CD4-positive, alpha-beta memory T cell (primary cell): ENCODE measurements at regions of chr11 and their contacts with region 1.

Region 1: DNA sequence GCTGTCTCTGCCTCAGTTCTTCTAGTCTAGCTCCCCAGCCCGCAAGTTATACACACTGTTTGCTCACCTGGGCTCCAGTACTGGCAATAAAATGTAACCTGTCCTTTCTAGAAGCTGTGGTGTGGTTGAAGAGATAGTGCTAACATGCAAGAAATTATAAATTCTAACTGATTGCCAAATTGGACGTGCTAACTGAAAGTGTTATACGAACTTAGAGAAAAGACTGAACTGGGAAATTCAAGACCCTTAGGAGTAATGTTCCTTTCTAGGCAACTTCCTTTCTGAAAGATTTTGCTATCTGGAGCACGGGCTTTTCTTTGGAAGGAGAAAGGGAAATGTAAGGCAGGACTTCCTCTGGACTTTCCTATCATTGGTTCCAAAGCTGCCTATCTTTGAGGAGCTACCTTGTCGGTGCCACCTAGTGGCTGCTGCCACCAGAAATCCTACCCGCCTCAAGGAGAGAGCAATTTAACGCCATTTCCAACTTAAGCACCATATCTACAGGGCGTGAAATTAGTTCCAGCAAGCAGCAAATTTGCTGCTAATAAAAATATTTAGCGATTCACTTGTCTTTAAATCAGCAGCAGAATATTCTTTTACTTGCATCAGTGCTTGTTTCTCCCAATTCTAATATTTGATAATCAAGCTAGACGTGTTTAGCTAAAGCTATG is 12.7 kb upstream of the TMEM218 start:
- DNase-seq: peak; percentile 13 to 41 (median 24)
- H3K4me3 ChIP-seq: no peak overlapping the region
- H3K4me3 Mint-ChIP-seq: no peak overlapping the region
- H3K27ac ChIP-seq: no peak overlapping the region
- H3K27ac Mint-ChIP-seq: no peak overlapping the region
- H3K4me1 ChIP-seq: no peaks in the 10 kb centered on the region
- H3K4me1 Mint-ChIP-seq: peaks cover 0 to 7% (median 0%) of the 10 kb centered on the region in 4 donors
- H3K27me3 ChIP-seq: peaks cover 6% of the 10 kb centered on the region
- H3K27me3 Mint-ChIP-seq: peaks cover 17 to 20% of the 10 kb centered on the region in 2 donors

Region 2: DNA sequence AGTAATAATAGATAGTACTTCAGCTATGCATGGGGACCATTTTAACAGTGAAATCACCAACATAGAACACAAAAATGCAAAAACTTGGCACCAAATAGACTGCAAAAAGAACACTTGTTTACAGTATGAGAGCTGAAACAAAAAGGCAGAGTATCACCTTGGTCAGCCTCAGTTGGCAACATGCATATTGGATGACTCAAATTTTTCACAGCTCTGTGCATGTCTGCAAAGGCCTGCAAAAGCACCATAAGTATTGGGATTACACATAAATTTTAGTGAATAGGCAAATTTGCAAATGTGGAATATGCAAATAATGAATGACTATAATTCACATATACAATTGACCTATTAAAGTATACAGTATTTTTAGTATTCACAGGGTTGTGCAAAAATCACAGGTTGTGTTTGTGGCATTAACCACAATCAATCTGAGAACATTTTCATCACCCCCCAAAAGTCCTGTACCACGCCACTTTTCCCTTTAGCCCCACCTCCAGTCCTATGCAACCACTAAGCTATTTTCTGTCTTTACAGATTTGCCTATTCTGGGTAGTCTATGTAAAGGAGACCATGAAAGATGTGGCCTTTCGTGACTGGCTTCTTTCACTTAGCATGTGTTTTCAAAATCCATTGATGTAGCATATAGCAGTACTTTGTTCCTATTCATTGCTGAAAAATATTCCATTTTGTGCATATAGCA is 122.9 kb before region 1 on chr11:
- CTCF ChIA-PET with region 1: no interaction called
- POLR2A ChIA-PET with region 1: no interaction called
- intact Hi-C with region 1: no loop called
- DNase-seq: no peak
- H3K4me3 ChIP-seq: no peak overlapping the region
- H3K4me3 Mint-ChIP-seq: no peak overlapping the region
- H3K27ac ChIP-seq: no peak overlapping the region
- H3K27ac Mint-ChIP-seq: no peak overlapping the region
- H3K4me1 ChIP-seq: no peaks in the 10 kb centered on the region
- H3K4me1 Mint-ChIP-seq: no peaks in the 10 kb centered on the region
- H3K27me3 ChIP-seq: no peaks in the 10 kb centered on the region
- H3K27me3 Mint-ChIP-seq: no peaks in the 10 kb centered on the region

Region 3: DNA sequence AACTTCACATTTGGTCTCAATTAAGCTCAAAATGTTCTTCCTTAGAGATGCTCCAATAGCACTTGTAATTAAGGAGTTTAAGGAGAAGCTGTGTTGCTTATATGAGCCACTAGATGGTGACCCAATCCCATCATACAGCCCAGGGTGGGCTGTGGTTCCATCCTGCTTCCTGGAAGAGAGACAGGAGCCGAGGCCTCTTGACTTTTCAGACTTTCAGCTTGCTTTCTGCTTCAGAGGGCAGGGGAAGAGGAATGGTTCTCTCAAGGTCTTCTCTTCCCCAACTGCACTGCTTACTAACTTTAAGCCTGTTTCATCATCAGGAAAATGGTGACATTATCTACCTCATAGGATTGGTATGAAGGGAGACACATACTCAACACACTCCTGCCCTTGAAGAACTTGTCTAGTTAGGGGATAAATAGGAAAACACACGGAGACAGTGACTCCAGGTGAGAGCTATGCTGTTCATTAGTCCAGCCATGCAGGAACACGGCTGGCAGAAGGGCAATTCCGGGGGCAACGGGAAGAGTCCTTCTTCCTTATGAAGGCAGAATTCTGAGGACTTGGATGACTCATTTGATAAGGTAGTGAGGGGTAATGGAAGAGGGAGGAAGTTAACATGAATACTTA is 32.7 kb before region 1 on chr11:
- CTCF ChIA-PET with region 1: interaction called, 23 read pairs
- POLR2A ChIA-PET with region 1: no interaction called
- intact Hi-C with region 1: no loop called
- DNase-seq: no peak
- H3K4me3 ChIP-seq: no peak overlapping the region
- H3K4me3 Mint-ChIP-seq: no peak overlapping the region
- H3K27ac ChIP-seq: no peak overlapping the region
- H3K27ac Mint-ChIP-seq: no peak overlapping the region
- H3K4me1 ChIP-seq: no peaks in the 10 kb centered on the region
- H3K4me1 Mint-ChIP-seq: no peaks in the 10 kb centered on the region
- H3K27me3 ChIP-seq: no peaks in the 10 kb centered on the region
- H3K27me3 Mint-ChIP-seq: no peaks in the 10 kb centered on the region

Region 4: GRCh38 chr11:125105926-125106325 is 18.2 kb before region 1 on chr11:
- CTCF ChIA-PET with region 1: interaction called, 28 read pairs
- POLR2A ChIA-PET with region 1: interaction called, 11 read pairs
- intact Hi-C with region 1: loop called (anchors 2 kb)
- DNase-seq: no peak
- H3K4me3 ChIP-seq: no peak overlapping the region
- H3K4me3 Mint-ChIP-seq: no peak overlapping the region
- H3K27ac ChIP-seq: no peak overlapping the region
- H3K27ac Mint-ChIP-seq: peak overlapping the region in 1 of 7 donors; percentile 67
- H3K4me1 ChIP-seq: peaks cover 9% of the 10 kb centered on the region
- H3K4me1 Mint-ChIP-seq: peaks cover 4 to 17% (median 8%) of the 10 kb centered on the region in 4 donors
- H3K27me3 ChIP-seq: no peaks in the 10 kb centered on the region
- H3K27me3 Mint-ChIP-seq: no peaks in the 10 kb centered on the region

Region 5: DNA sequence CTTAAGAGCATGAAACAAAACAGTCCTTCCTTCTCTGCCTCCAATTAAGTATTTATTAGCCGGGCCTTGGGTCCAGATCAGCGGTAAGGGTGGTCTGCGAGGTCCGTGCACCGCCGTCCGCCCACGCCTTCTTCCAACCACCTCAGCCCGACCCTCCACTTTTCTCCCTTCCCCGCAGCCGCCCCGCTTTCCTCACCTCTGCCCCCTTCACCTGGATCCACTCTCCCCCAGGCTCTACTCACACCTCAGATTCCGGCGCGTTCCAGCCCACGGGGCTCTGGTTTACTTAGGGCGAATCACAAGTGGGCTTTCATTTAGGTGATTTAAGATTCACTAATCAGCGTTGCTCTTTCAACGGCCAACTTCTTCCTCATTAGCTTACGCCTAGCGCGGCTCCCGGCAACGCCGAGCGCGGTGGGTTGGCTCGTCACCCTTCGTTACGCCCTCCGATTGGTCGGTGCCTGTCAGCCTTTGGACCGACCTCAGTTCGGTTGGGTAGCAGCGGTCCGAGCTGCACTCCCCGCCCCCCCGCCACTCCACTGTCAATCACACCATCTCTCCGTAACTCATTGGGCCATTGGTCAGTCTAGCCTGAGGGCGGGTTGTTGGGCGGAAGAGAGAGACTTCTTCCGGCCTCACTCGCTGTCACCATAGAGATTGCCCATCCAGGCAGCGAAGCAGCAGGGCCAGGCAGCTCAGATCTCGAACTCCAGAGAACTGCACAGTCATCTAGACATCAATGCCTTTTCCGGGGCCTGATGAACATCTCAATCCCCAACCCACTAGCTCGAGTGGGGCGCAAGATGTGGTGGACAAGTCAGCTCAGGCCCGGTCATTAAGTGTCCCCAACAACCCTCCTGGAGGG is 12.5 kb before region 1 on chr11 and contains the start of gene TMEM218:
- CTCF ChIA-PET with region 1: interaction called, 28 read pairs
- POLR2A ChIA-PET with region 1: interaction called, 11 read pairs
- intact Hi-C with region 1: loop called (anchors 2 kb)
- DNase-seq: peak; percentile 94 to 97 (median 96)
- H3K4me3 ChIP-seq: peak within 1 kb of the TSS; percentile 72 to 89
- H3K4me3 Mint-ChIP-seq: peak within 1 kb of the TSS; percentile 92 to 100 (median 98)
- H3K27ac ChIP-seq: peak within 1 kb of the TSS; percentile 68
- H3K27ac Mint-ChIP-seq: peak within 1 kb of the TSS; percentile 74 to 99 (median 97)
- H3K4me1 ChIP-seq: peaks cover 18% of the 10 kb centered on the region
- H3K4me1 Mint-ChIP-seq: peaks cover 4 to 25% (median 18%) of the 10 kb centered on the region in 4 donors
- H3K27me3 ChIP-seq: no peaks in the 10 kb centered on the region
- H3K27me3 Mint-ChIP-seq: no peaks in the 10 kb centered on the region
- total RNA-seq, gene TMEM218: 15.1 to 16.6 TPM

Region 6: GRCh38 chr11:125916683-125917347 is 792.7 kb after region 1 on chr11:
- CTCF ChIA-PET with region 1: no interaction called
- POLR2A ChIA-PET with region 1: no interaction called
- intact Hi-C with region 1: no loop called
- DNase-seq: no peak
- H3K4me3 ChIP-seq: no peak overlapping the region
- H3K4me3 Mint-ChIP-seq: no peak overlapping the region
- H3K27ac ChIP-seq: no peak overlapping the region
- H3K27ac Mint-ChIP-seq: no peak overlapping the region
- H3K4me1 ChIP-seq: no peaks in the 10 kb centered on the region
- H3K4me1 Mint-ChIP-seq: no peaks in the 10 kb centered on the region
- H3K27me3 ChIP-seq: no peaks in the 10 kb centered on the region
- H3K27me3 Mint-ChIP-seq: peaks cover 13 to 34% of the 10 kb centered on the region in 2 donors